ENCODE measurements at regions of chr19 and their contacts with region 1.

Region 1: GRCh38 chr19:14347999-14348889 is 33.0 kb upstream of the ADGRE5 start:
- DNase-seq: peak; percentile 69 to 94 (median 76)
- ATAC-seq: peak; percentile 97
- H3K4me3 ChIP-seq: peak overlapping the region in 1 of 2 donors; percentile 14
- H3K27ac ChIP-seq: no peak overlapping the region
- H3K4me1 ChIP-seq: peaks cover 0 to 15% of the 10 kb centered on the region in 2 donors
- H3K27me3 ChIP-seq: no peaks in the 10 kb centered on the region
- CTCF ChIP-seq: peak; percentile 97 to 98

Region 2: GRCh38 chr19:14147797-14148605 is 200.2 kb before region 1 on chr19:
- intact Hi-C with region 1: loop called in 1 of 2 experiments (anchors 5 kb)
- DNase-seq: peak; percentile 64 to 90 (median 84)
- ATAC-seq: peak; percentile 92
- H3K4me3 ChIP-seq: no peak overlapping the region
- H3K27ac ChIP-seq: peak overlapping the region; percentile 76 to 80
- H3K4me1 ChIP-seq: peaks cover 18 to 52% of the 10 kb centered on the region in 2 donors
- H3K27me3 ChIP-seq: no peaks in the 10 kb centered on the region
- CTCF ChIP-seq: peak; percentile 73 to 83

Region 3: GRCh38 chr19:14198384-14199376 is 149.6 kb before region 1 on chr19:
- intact Hi-C with region 1: loop called in 1 of 2 experiments (anchors 10 kb)
- DNase-seq: no peak
- ATAC-seq: no peak
- H3K4me3 ChIP-seq: no peak overlapping the region
- H3K27ac ChIP-seq: no peak overlapping the region
- H3K4me1 ChIP-seq: peaks cover 0 to 2% of the 10 kb centered on the region in 2 donors
- H3K27me3 ChIP-seq: peaks cover 0 to 8% of the 10 kb centered on the region in 2 donors
- CTCF ChIP-seq: no peak

Region 4: GRCh38 chr19:14300303-14300702 is 47.9 kb before region 1 on chr19:
- intact Hi-C with region 1: no loop called
- DNase-seq: no peak
- ATAC-seq: no peak
- H3K4me3 ChIP-seq: no peak overlapping the region
- H3K27ac ChIP-seq: no peak overlapping the region
- H3K4me1 ChIP-seq: no peaks in the 10 kb centered on the region
- H3K27me3 ChIP-seq: no peaks in the 10 kb centered on the region
- CTCF ChIP-seq: no peak

Region 5: DNA sequence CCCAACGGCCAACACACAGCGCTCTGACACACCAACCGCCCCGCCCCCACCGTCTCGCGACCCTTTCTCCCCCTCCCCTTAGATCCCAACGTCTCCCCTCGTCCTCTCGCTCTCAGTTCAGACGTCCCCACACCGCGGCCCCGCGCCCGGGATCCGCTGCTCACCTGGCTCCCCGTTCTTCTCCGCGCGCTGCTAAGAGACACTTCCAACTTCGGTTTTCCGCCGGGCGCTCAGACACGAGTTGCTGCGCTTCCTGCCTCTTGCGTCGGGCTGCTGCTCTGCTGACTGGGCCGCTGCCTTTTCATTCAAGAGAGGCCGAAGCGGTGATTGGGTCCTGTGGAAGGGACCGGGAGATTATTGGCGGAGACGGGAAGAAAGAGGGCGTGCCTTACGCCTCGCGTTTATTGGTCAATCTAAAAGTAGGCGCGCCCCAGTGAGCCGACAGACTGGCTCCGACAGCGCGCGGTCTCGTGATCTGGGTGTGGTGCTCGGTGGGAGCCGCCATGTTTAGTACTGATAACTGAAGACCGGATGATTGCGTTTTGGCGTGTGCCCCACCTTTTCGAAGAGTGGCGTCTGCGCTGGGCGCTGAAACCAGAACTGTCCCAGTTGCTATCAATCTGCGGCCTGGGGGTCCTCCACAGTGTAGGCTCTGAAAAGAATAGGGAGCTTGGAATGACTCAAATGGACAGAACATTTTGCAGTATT is 71.0 kb after region 1 on chr19 and contains the start of gene DDX39A:
- intact Hi-C with region 1: no loop called
- DNase-seq: peak; percentile 97 to 99 (median 98)
- ATAC-seq: peak; percentile 97
- H3K4me3 ChIP-seq: peak within 1 kb of the TSS; percentile 87 to 98
- H3K27ac ChIP-seq: peak within 1 kb of the TSS; percentile 91 to 94
- H3K4me1 ChIP-seq: peaks cover 13 to 48% of the 10 kb centered on the region in 2 donors
- H3K27me3 ChIP-seq: no peaks in the 10 kb centered on the region
- CTCF ChIP-seq: no peak
- polyA plus RNA-seq, gene DDX39A: 45.7 to 57.5 (median 49.9) TPM